Calu3 (cell line): ENCODE measurements at regions of chr5 and their contacts with region 1.

Region 1: GRCh38 chr5:113502073-113502472 is 11.4 kb upstream of the YTHDC2 start:
- DNase-seq: no peak
- H3K4me3 Mint-ChIP-seq: no peak overlapping the region
- H3K27ac Mint-ChIP-seq: no peak overlapping the region
- H3K4me1 Mint-ChIP-seq: no peaks in the 10 kb centered on the region
- H3K27me3 Mint-ChIP-seq: peaks cover 49% of the 10 kb centered on the region
- CTCF ChIP-seq: no peak

Region 2: GRCh38 chr5:112995764-112996618 is 506.1 kb before region 1 on chr5:
- CTCF ChIA-PET with region 1: no interaction called
- intact Hi-C with region 1: no loop called
- DNase-seq: peak; percentile 79
- H3K4me3 Mint-ChIP-seq: no peak overlapping the region
- H3K27ac Mint-ChIP-seq: no peak overlapping the region
- H3K4me1 Mint-ChIP-seq: no peaks in the 10 kb centered on the region
- H3K27me3 Mint-ChIP-seq: no peaks in the 10 kb centered on the region
- CTCF ChIP-seq: peak; percentile 79

Region 3: DNA sequence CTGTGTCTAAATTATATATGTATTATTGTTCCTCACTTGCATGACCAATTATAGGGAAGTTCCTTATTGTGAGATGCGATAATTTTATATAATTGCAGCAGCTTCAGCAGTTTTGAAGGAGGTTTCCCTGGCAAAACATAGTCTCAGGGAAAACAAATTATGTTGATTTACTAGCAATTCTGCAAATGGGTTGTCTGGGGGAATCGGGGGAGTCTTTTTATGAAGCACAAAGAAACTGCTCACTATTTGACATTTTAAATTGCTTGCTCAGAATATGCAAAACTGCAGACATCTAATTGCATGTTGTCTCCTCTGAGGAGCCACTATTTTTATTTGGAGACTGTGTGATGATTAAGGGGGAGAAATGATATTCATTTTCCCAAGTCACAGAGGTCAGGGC is 373.0 kb after region 1 on chr5:
- CTCF ChIA-PET with region 1: no interaction called
- intact Hi-C with region 1: loop called (anchors 5 kb)
- DNase-seq: no peak
- H3K4me3 Mint-ChIP-seq: no peak overlapping the region
- H3K27ac Mint-ChIP-seq: no peak overlapping the region
- H3K4me1 Mint-ChIP-seq: no peaks in the 10 kb centered on the region
- H3K27me3 Mint-ChIP-seq: no peaks in the 10 kb centered on the region
- CTCF ChIP-seq: no peak